Activated CD4-positive, alpha-beta memory T cell treated with anti-CD3 and anti-CD28 coated beads, Interleukin-2, amount 10 ng/mL, durations not matched to agents 7 days and 5 days (primary cell): ENCODE measurements at regions of chr17 and their contacts with region 1.

Region 1: DNA sequence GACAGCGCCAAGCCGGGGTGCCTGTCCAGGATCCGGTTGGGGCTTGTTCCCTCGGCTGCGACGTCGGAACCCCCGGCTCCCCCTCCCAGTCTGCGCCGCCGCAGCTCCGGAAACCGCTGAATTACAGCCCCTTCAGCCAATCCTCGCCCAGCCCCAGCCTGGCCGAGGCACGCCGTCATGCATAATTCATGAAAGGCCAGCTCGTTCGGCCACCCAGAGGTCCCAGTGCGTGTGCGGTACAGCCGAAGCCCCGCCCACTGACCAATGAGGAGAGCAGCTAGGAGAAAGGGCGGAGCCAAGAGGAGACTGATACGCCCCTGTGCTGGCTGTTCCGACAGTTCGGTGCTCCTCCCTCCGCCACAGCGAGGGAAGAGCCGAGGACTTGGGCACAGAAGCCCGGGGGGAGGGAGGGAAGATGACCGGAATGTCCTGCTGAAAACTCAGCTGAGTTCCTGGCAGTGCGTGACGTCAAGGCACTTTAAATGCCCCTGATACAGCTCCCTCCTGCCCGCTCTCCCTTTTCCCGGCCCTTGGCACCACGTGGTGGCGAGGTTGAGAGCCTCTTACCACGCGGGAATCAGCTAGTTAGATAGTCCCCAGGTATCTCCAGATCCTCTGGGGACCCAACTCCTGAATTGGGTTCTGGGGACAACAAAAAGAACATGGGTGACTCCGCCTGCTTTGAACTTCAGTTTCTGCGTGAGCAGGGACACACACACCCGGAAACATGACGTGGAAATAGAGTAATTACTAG is at the start of gene STAT3:
- DNase-seq: peak; percentile 100
- H3K4me3 Mint-ChIP-seq: peak within 1 kb of the TSS; percentile 90
- H3K27ac Mint-ChIP-seq: peak within 1 kb of the TSS; percentile 98
- H3K4me1 Mint-ChIP-seq: peaks cover 46% of the 10 kb centered on the region
- H3K27me3 Mint-ChIP-seq: no peaks in the 10 kb centered on the region
- total RNA-seq, gene STAT3: 130 to 135 TPM

Region 2: GRCh38 chr17:42248351-42249179 is 140.0 kb before region 1 on chr17:
- CTCF ChIA-PET with region 1: no interaction called
- POLR2A ChIA-PET with region 1: interaction called, 17 read pairs
- DNase-seq: peak; percentile 84
- H3K4me3 Mint-ChIP-seq: peak overlapping the region; percentile 77
- H3K27ac Mint-ChIP-seq: peak overlapping the region; percentile 91
- H3K4me1 Mint-ChIP-seq: peaks cover 68% of the 10 kb centered on the region
- H3K27me3 Mint-ChIP-seq: no peaks in the 10 kb centered on the region

Region 3: DNA sequence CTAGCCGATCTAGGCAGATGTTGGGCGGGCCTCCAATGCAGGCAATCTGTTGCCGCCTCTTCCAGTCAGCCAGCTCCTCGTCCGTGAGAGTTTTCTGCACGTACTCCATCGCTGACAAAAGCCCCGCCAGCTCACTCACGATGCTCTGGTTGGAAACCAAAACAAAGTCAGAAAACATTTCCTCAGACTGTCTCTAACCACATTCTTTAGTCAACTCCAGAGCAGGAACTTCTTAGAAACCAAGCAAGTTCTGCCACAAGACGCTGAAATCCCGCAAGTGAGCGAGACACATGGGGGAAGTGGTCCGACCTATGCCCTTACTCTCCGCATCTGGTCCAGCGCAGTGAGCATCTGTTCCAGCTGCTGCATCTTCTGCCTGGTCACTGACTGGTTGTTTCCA is 51.1 kb before region 1 on chr17:
- CTCF ChIA-PET with region 1: interaction called, 4 read pairs
- POLR2A ChIA-PET with region 1: interaction called, 32 read pairs
- DNase-seq: peak; percentile 86
- H3K4me3 Mint-ChIP-seq: peak overlapping the region; percentile 34
- H3K27ac Mint-ChIP-seq: peak overlapping the region; percentile 73
- H3K4me1 Mint-ChIP-seq: peaks cover 67% of the 10 kb centered on the region
- H3K27me3 Mint-ChIP-seq: no peaks in the 10 kb centered on the region

Region 4: GRCh38 chr17:42399948-42400843 is 11.6 kb after region 1 on chr17:
- CTCF ChIA-PET with region 1: interaction called, 15 read pairs
- POLR2A ChIA-PET with region 1: interaction called, 29 read pairs
- DNase-seq: no peak
- H3K4me3 Mint-ChIP-seq: no peak overlapping the region
- H3K27ac Mint-ChIP-seq: no peak overlapping the region
- H3K4me1 Mint-ChIP-seq: peaks cover 13% of the 10 kb centered on the region
- H3K27me3 Mint-ChIP-seq: peaks cover 11% of the 10 kb centered on the region

Region 5: GRCh38 chr17:42517516-42517915 is 129.0 kb after region 1 on chr17:
- CTCF ChIA-PET with region 1: interaction called, 11 read pairs
- POLR2A ChIA-PET with region 1: interaction called, 4 read pairs
- DNase-seq: peak; percentile 84
- H3K4me3 Mint-ChIP-seq: no peak overlapping the region
- H3K27ac Mint-ChIP-seq: peak overlapping the region; percentile 26
- H3K4me1 Mint-ChIP-seq: peaks cover 1% of the 10 kb centered on the region
- H3K27me3 Mint-ChIP-seq: peaks cover 26% of the 10 kb centered on the region